B cell (primary cell): ENCODE measurements at regions of chr6 and their contacts with region 1.

Region 1: GRCh38 chr6:139392794-139393193 is 18.3 kb upstream of the CITED2 start:
- DNase-seq: no peak
- ATAC-seq: peak; percentile 51
- H3K4me3 ChIP-seq: peak overlapping the region in 1 of 5 experiments; percentile 17
- H3K4me3 Mint-ChIP-seq: peak overlapping the region; percentile 41
- H3K27ac ChIP-seq: no peak overlapping the region
- H3K27ac Mint-ChIP-seq: no peak overlapping the region
- H3K4me1 ChIP-seq: no peaks in the 10 kb centered on the region
- H3K4me1 Mint-ChIP-seq: peaks cover 4% of the 10 kb centered on the region
- H3K27me3 ChIP-seq: no peaks in the 10 kb centered on the region
- H3K27me3 Mint-ChIP-seq: no peaks in the 10 kb centered on the region
- CTCF ChIP-seq: no peak

Region 2: GRCh38 chr6:138856654-138857053 is 536.1 kb before region 1 on chr6:
- CTCF ChIA-PET with region 1: no interaction called
- POLR2A ChIA-PET with region 1: interaction called, 10 read pairs
- intact Hi-C with region 1: no loop called
- DNase-seq: no peak
- ATAC-seq: no peak
- H3K4me3 ChIP-seq: no peak overlapping the region
- H3K4me3 Mint-ChIP-seq: no peak overlapping the region
- H3K27ac ChIP-seq: no peak overlapping the region
- H3K27ac Mint-ChIP-seq: no peak overlapping the region
- H3K4me1 ChIP-seq: no peaks in the 10 kb centered on the region
- H3K4me1 Mint-ChIP-seq: no peaks in the 10 kb centered on the region
- H3K27me3 ChIP-seq: no peaks in the 10 kb centered on the region
- H3K27me3 Mint-ChIP-seq: peaks cover 9% of the 10 kb centered on the region
- CTCF ChIP-seq: no peak